ENCODE measurements at regions of chr6 and their contacts with region 1.

Region 1: GRCh38 chr6:73985891-73986290 is 289.9 kb downstream of the CD109 start:
- DNase-seq: peak; percentile 45
- H3K4me3 ChIP-seq: no peak overlapping the region
- H3K27ac ChIP-seq: no peak overlapping the region
- H3K4me1 ChIP-seq: no peaks in the 10 kb centered on the region
- H3K27me3 ChIP-seq: peaks cover 2% of the 10 kb centered on the region
- CTCF ChIP-seq: peak; percentile 58 to 91

Region 2: DNA sequence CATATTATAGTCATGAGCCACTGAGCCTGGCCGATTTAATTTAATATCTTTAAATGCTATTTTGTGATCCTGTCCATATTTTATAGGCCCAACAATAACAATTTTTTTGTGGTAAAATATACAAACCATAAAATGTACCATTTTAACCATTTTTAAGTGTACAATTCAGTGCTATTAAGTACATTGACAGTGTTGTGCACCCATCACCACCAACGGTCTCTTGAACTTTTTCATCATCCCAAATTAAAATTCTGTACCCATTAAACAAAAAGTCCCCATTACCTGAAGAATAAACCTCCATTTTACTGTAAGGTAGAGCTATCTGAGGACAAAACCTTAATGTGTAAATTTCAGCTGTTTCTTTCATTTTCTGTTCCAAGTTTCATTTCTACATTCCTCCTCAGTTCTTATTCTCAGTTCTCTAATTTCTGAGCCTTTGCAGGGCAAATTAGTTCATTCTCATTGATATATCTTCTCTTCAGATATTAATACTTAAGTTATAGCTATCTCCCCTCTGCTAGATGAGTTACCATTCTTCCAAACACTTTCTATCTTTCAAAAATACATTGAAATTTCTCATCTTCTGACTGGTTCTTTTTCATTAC is 514.1 kb before region 1 on chr6:
- CTCF ChIA-PET with region 1: no interaction called
- dilution Hi-C with region 1: no loop called
- in situ Hi-C with region 1: no loop called
- intact Hi-C with region 1: no loop called
- DNase-seq: no peak
- H3K4me3 ChIP-seq: no peak overlapping the region
- H3K27ac ChIP-seq: no peak overlapping the region
- H3K4me1 ChIP-seq: no peaks in the 10 kb centered on the region
- H3K27me3 ChIP-seq: no peaks in the 10 kb centered on the region
- CTCF ChIP-seq: no peak

Region 3: DNA sequence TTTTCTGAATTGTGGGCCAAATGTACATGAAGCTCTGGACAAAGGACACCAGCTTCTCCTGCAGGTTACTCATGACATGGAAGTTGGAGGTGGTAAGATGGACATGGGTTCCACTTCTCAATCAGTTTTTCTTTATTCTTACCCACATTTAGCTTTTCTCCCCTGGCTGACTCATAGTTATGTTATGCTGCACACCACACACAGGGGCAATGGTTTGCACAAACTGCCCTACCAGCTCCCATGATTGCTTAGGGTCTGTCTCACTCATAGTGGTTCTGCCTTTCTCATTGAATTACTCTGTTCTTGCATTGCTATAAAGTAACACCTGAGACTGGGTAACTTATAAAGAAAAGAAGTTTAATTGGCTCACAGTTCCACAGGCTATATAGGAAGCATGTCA is 294.4 kb before region 1 on chr6:
- CTCF ChIA-PET with region 1: no interaction called
- dilution Hi-C with region 1: no loop called
- in situ Hi-C with region 1: no loop called
- intact Hi-C with region 1: no loop called
- DNase-seq: peak; percentile 43
- H3K4me3 ChIP-seq: no peak overlapping the region
- H3K27ac ChIP-seq: no peak overlapping the region
- H3K4me1 ChIP-seq: peaks cover 24% of the 10 kb centered on the region
- H3K27me3 ChIP-seq: no peaks in the 10 kb centered on the region
- CTCF ChIP-seq: no peak

Region 4: GRCh38 chr6:74091136-74091793 is 105.4 kb after region 1 on chr6:
- CTCF ChIA-PET with region 1: no interaction called
- dilution Hi-C with region 1: no loop called
- in situ Hi-C with region 1: loop called in 1 of 2 experiments (anchors 10 kb)
- intact Hi-C with region 1: no loop called
- DNase-seq: peak; percentile 20
- H3K4me3 ChIP-seq: no peak overlapping the region
- H3K27ac ChIP-seq: no peak overlapping the region
- H3K4me1 ChIP-seq: no peaks in the 10 kb centered on the region
- H3K27me3 ChIP-seq: no peaks in the 10 kb centered on the region
- CTCF ChIP-seq: peak; percentile 70 to 73

Region 5: GRCh38 chr6:74574794-74575193 is 588.9 kb after region 1 on chr6:
- CTCF ChIA-PET with region 1: no interaction called
- dilution Hi-C with region 1: no loop called
- in situ Hi-C with region 1: no loop called
- intact Hi-C with region 1: loop called (anchors 10 kb)
- DNase-seq: no peak
- H3K4me3 ChIP-seq: no peak overlapping the region
- H3K27ac ChIP-seq: no peak overlapping the region
- H3K4me1 ChIP-seq: no peaks in the 10 kb centered on the region
- H3K27me3 ChIP-seq: no peaks in the 10 kb centered on the region
- CTCF ChIP-seq: peak; percentile 29 to 34